Pancreas (tissue), 10 donors: ENCODE measurements at regions of chr10 and their contacts with region 1.

Region 1: GRCh38 chr10:121722665-121723064 is 124.4 kb upstream of the FGFR2 start:
- DNase-seq: no peak
- ATAC-seq: no peak
- H3K4me3 ChIP-seq: no peak overlapping the region
- H3K27ac ChIP-seq: no peak overlapping the region
- H3K4me1 ChIP-seq: no peaks in the 10 kb centered on the region
- H3K27me3 ChIP-seq: no peaks in the 10 kb centered on the region
- CTCF ChIP-seq: no peak

Region 2: DNA sequence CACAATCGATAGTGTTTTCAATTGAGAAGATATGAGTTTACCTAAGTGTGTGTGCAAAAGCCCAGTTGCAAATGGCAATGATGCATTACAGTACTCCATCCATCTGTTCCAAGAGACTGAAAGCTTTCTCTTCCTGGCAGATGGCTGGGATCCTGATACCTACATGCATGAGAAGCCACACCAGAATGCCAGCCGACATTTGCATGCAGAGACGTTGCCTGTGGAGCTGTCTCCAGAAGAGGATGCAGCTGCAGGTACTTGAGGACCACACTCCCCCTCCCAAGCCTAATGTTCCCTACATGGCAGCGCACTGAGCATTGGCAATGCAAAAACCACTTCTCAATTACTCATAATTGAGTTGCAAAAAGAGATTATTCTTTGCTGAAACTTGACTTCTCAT is 539.4 kb before region 1 on chr10:
- intact Hi-C with region 1: no loop called
- DNase-seq: no peak
- ATAC-seq: no peak
- H3K4me3 ChIP-seq: no peak overlapping the region
- H3K27ac ChIP-seq: no peak overlapping the region
- H3K4me1 ChIP-seq: no peaks in the 10 kb centered on the region
- H3K27me3 ChIP-seq: no peaks in the 10 kb centered on the region
- CTCF ChIP-seq: no peak

Region 3: DNA sequence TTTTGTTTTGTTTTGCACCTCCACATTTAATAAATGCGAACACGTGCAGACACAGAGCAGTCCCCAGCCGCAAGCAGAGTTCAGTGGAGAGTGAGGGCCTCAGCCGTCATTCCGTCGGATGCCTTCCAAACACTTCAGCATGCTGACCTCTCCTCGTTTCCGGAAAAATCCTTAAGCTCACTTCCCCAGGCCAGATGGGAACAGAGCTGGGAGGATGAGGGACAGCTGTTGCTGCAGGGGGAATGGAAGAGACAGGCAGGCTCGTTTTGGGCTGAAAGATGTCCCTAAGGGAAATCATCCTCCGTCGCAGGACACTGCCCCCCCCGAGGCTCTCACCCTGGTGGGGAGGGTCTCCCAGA is 107.3 kb before region 1 on chr10:
- intact Hi-C with region 1: loop called in 1 of 3 experiments (anchors 10 kb)
- DNase-seq: no peak
- ATAC-seq: no peak
- H3K4me3 ChIP-seq: no peak overlapping the region
- H3K27ac ChIP-seq: no peak overlapping the region
- H3K4me1 ChIP-seq: no peaks in the 10 kb centered on the region
- H3K27me3 ChIP-seq: no peaks in the 10 kb centered on the region
- CTCF ChIP-seq: no peak